Calu3 (cell line): ENCODE measurements at regions of chr18 and their contacts with region 1.

Region 1: DNA sequence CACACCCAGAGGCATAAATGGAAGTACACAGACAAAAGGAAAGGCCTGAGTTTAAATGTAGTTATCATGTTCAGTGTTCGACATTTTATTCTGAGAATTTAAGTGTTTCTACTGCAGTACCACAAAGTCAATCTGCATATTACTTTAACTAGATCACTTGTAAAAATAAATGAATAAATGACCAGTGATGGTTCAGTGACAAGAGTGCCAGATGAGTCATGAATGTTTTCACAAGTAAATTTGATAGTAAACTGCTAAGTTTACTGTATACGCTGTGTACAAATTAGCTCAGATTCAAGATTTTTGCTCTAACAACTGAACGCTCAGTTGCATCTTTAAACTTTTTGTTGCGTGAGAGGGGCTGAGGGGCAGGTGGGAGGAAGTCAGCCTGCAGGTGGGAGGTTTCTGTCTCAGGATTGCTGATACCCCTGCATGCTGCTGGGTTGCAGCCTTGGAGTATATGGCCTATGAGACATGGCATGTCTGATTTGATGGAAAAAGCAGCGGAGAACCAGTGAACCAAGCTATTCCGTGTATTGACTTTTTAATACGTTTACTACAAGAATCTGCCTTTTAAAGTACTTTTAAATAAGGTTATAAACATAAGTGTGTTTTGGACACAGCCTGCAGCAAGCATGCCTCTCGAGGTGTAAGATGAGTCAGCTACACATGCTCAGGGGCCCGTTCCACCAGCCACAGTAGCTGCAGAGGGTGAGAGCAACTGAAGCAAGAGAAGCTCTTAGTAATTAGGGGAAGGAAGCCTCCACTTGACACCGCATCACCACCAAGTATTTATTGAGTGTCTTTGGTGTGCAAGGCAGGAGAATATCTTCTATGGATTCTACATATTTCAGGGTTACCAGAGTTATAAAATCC is 245.1 kb downstream of the NEDD4L start:
- DNase-seq: peak; percentile 56
- H3K4me3 Mint-ChIP-seq: peak overlapping the region; percentile 18
- H3K27ac Mint-ChIP-seq: peak overlapping the region; percentile 69
- H3K4me1 Mint-ChIP-seq: peaks cover 86% of the 10 kb centered on the region
- H3K27me3 Mint-ChIP-seq: no peaks in the 10 kb centered on the region
- CTCF ChIP-seq: no peak

Region 2: GRCh38 chr18:58269931-58270330 is 19.2 kb before region 1 on chr18:
- CTCF ChIA-PET with region 1: no interaction called
- intact Hi-C with region 1: loop called (anchors 2 kb)
- DNase-seq: peak; percentile 70
- H3K4me3 Mint-ChIP-seq: peak overlapping the region; percentile 61
- H3K27ac Mint-ChIP-seq: peak overlapping the region; percentile 95
- H3K4me1 Mint-ChIP-seq: peaks cover 90% of the 10 kb centered on the region
- H3K27me3 Mint-ChIP-seq: no peaks in the 10 kb centered on the region
- CTCF ChIP-seq: no peak

Region 3: DNA sequence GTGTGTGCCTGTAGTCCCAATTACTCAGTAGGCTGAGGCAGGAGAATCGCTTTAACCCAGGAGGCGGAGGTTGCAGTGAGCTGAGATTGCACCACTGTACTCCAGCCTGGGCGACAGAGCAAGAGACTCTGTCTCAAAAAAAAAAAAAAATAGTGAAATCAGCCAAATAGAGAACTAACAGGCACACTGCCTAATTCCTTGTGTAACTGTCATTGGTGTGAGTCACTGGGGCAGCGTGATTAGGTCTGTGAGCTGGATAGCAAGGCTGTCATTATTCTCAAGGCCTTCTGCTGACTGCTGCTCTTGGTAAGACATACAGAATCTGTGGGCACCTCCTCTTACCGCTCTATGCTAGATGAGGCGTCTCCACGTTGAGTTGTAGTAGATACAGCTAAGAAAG is 25.1 kb after region 1 on chr18:
- CTCF ChIA-PET with region 1: interaction called, 4 read pairs
- intact Hi-C with region 1: loop called (anchors 1 kb)
- DNase-seq: peak; percentile 49
- H3K4me3 Mint-ChIP-seq: peak overlapping the region; percentile 59
- H3K27ac Mint-ChIP-seq: peak overlapping the region; percentile 58
- H3K4me1 Mint-ChIP-seq: peaks cover 78% of the 10 kb centered on the region
- H3K27me3 Mint-ChIP-seq: no peaks in the 10 kb centered on the region
- CTCF ChIP-seq: no peak

Region 4: GRCh38 chr18:58321986-58322385 is 32.8 kb after region 1 on chr18:
- CTCF ChIA-PET with region 1: interaction called, 4 read pairs
- intact Hi-C with region 1: loop called (anchors 5 kb)
- DNase-seq: peak; percentile 70
- H3K4me3 Mint-ChIP-seq: no peak overlapping the region
- H3K27ac Mint-ChIP-seq: peak overlapping the region; percentile 41
- H3K4me1 Mint-ChIP-seq: peaks cover 37% of the 10 kb centered on the region
- H3K27me3 Mint-ChIP-seq: no peaks in the 10 kb centered on the region
- CTCF ChIP-seq: peak; percentile 54